ENCODE measurements at regions of chr18 and their contacts with region 1.

Region 1: DNA sequence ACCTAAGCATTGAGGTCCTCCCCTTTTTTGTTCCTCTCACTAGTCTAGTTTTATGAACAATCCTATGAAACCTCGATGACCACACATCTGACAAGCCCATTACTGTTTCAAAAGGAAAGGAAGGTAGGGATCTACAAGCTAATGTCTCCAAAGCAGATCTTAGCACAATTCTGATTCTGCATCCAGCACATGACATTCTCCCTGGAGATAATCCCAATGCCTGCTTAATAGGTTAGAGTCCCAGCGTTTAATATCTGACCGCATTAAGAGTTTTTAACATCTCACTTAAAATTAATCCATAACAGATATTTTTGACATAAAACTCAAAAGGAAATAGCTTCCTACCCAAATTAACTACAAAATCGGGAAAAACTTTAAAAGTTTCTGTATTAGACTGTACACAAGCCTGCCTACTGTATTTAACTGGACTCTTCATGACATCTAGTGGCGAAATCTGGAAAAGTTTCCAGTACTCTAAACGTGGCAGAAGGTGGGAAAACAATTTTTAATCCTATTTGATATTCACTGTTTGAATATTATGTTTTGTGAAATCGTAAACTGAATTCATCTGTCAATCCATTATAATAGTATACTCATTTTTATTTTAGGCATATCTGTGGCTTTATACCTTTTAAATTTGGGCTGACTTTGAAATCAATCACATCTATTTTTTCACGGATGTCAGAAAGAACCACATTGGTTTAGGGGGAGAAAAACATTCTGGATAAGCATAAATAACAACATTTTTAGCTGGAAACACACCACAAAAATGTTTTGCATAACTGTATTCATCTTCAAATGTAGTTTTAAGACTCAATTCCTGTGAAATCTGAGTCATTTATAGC is 62.4 kb downstream of the TXNL1 start:
- H3K4me3 ChIP-seq: no peak overlapping the region
- H3K27ac ChIP-seq: no peak overlapping the region
- H3K4me1 ChIP-seq: no peaks in the 10 kb centered on the region
- CTCF ChIP-seq: no peak

Region 2: DNA sequence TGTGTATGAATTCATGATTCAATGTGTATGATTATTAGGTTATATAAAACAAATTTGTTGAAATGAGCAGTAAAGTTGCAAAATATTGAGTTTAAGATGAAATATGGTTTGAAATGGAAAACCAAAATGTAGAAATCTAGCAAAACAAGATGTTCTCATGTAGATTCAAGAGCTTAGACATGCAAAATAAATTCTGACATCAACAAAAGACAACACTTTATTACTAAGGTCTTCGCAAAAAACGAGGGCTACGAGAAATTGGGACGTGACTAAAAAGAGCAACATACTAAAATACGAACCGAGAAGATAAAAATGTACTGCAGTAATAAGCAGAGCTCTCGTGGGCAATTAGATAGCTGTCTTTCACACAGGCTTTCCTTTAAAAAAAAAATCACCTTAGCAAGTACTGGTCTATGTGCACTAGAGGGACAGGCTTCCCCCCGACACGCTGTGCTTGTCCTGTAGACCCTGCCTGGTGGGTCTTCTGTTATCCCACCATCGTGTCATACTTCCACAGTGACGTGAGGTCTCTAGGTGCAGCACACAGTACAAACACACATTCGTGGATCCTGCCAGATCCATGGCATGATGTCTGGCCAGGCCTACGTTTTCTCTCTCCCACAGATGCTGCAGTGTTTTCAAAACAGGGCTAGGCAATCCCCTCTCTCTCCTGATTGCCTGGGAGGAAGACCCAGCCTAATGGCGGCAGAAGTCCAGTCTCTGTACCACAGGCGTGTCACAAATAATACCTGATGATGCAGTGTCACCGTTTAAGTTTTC is 1228.9 kb before region 1 on chr18:
- CTCF ChIA-PET with region 1: interaction called, 10 read pairs
- POLR2A ChIA-PET with region 1: no interaction called
- H3K4me3 ChIP-seq: no peak overlapping the region
- H3K27ac ChIP-seq: no peak overlapping the region
- H3K4me1 ChIP-seq: peaks cover 20% of the 10 kb centered on the region
- CTCF ChIP-seq: no peak

Region 3: DNA sequence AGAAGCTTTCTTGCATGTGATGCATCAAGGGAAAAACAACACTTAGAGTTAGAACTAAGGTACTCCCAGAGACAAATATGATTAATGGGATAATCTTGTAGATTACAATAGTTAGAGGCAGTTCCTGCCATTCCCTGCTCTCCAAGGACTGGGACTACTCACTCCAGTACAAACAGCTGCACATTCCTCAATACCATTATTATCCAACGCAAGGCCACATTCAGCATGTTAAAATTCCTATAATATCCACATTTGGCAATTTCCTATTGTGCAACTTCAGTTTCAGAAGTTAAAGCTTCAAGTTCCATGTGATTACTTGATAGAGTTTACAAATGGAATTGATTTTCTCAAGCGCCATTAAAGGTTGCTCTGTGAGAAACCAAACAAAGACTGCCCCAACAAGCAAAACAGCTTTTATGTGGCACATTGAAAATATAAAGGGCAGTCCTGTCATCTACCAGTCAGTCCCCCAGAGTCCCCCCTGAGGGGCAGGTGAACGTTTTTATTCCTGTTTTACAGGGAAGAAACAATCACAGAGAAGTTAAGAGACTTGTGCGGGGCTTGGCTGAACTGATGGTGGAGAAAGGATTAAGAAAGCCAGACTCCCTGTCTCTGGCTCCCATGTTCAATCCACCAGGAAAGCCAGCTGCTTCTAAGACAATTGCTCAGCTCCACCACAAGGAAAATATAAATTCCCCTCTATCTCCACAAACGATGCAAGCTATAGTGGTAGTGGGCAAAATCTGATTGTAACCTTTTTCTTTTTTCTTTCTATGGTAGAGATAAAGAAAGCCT is 10.3 kb before region 1 on chr18:
- CTCF ChIA-PET with region 1: interaction called, 10 read pairs
- POLR2A ChIA-PET with region 1: no interaction called
- H3K4me3 ChIP-seq: no peak overlapping the region
- H3K27ac ChIP-seq: no peak overlapping the region
- H3K4me1 ChIP-seq: no peaks in the 10 kb centered on the region
- CTCF ChIP-seq: no peak

Region 4: GRCh38 chr18:56678836-56679565 is 103.0 kb after region 1 on chr18:
- CTCF ChIA-PET with region 1: no interaction called
- POLR2A ChIA-PET with region 1: no interaction called
- H3K4me3 ChIP-seq: no peak overlapping the region
- H3K27ac ChIP-seq: no peak overlapping the region
- H3K4me1 ChIP-seq: no peaks in the 10 kb centered on the region
- CTCF ChIP-seq: no peak

Measured in HEK293 (cell line).